SK-N-SH (cell line): ENCODE measurements at regions of chr18 and their contacts with region 1.

Region 1: DNA sequence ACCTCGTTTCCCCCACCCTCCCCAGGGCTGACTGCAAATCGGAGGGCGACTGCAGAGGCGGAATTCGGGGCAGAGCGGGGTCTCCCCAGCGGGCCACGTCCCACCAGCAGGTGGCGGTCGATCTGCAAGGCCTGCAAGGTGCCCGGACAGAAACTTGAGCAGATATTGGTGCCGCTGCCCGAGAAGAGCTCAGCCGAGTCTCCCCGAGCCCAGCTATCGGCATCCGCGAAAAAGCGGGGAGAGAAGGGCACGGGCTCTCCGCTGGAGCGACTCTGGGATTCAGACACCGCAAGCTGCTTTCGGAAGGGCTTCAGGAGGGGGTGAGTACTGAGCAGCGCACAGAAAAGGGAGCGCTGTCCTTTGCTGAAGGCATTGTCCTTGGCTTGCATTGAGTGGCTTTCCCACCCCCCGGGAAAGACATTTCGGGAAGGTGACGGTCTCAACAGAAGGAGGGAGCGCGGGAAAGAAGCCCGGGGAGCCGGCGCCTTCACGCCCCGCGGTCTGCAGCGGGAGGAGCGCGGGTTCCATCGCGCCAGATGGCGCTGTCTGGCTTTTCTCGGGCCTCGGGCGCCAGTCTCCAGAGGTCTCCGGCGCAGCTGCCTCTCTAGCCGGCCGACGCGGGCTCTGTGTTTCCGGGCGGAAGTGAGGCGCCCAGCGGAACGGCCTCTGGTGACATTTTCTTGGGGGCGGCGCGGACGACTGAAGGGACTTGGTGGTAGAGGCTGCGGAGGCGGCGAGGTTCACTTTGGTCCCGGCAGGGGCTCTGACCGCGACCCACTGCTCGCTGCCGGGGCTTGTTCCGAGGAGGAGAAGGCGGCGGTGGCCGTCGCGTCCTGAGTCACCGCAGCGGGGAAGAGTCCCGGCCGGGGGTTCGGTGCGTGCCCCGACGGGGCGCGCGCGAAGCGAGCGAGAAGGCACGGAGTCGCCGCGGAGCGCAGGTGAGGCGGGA is 69.5 kb downstream of the HAUS1 start:
- DNase-seq: peak; percentile 95
- H3K4me3 ChIP-seq: peak overlapping the region; percentile 77 to 98
- H3K27ac ChIP-seq: peak overlapping the region; percentile 85 to 92
- H3K4me1 ChIP-seq: peaks cover 7 to 14% of the 10 kb centered on the region in 2 experiments; a peak in 2 of 4 replicates
- H3K27me3 ChIP-seq: no peaks in the 10 kb centered on the region
- CTCF ChIP-seq: peak; percentile 91
- EP300 ChIP-seq: peak; percentile 22 to 43; a peak in 2 of 4 replicates
- RAD21 ChIP-seq: peak; percentile 77

Region 2: GRCh38 chr18:46148810-46149209 is 24.9 kb before region 1 on chr18:
- CTCF ChIA-PET with region 1: interaction called, 42 read pairs
- POLR2A ChIA-PET with region 1: interaction called, 3 read pairs
- DNase-seq: peak; percentile 70
- H3K4me3 ChIP-seq: no peak overlapping the region; a peak in 1 of 4 replicates
- H3K27ac ChIP-seq: no peak overlapping the region
- H3K4me1 ChIP-seq: peaks cover 12 to 13% of the 10 kb centered on the region in 2 experiments; a peak in 1 of 4 replicates
- H3K27me3 ChIP-seq: no peaks in the 10 kb centered on the region
- CTCF ChIP-seq: peak; percentile 84
- EP300 ChIP-seq: no peak
- RAD21 ChIP-seq: peak; percentile 81

Region 3: DNA sequence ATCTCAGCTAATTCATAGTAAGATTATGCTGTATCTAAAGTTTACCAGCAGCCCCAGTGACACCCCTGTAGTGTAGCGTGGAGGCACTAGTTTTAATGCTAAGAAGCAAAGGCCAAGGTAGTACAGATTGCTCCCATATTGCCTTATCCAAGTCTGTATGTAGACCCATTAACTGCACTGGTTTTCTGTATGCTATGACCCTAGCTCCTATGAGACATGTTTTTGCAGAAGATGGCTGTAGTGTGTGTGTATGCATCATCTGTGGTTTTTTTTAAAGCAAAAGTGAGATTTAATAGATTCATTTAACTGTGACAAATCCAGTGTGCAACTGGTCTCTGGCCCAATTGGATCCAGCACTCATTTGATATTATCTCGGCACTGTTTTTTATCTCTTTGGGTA is 17.0 kb after region 1 on chr18:
- CTCF ChIA-PET with region 1: interaction called, 14 read pairs
- POLR2A ChIA-PET with region 1: no interaction called
- DNase-seq: no peak
- H3K4me3 ChIP-seq: no peak overlapping the region
- H3K27ac ChIP-seq: no peak overlapping the region
- H3K4me1 ChIP-seq: no peaks in the 10 kb centered on the region
- H3K27me3 ChIP-seq: no peaks in the 10 kb centered on the region
- CTCF ChIP-seq: no peak
- EP300 ChIP-seq: no peak
- RAD21 ChIP-seq: no peak

Region 4: GRCh38 chr18:46213295-46213694 is 39.6 kb after region 1 on chr18:
- CTCF ChIA-PET with region 1: interaction called, 13 read pairs
- POLR2A ChIA-PET with region 1: no interaction called
- DNase-seq: peak; percentile 17
- H3K4me3 ChIP-seq: no peak overlapping the region
- H3K27ac ChIP-seq: no peak overlapping the region
- H3K4me1 ChIP-seq: peaks cover 0 to 11% of the 10 kb centered on the region in 2 experiments; a peak in 2 of 4 replicates
- H3K27me3 ChIP-seq: no peaks in the 10 kb centered on the region
- CTCF ChIP-seq: peak; percentile 42
- EP300 ChIP-seq: no peak
- RAD21 ChIP-seq: peak; percentile 33; the same call in 1 of the 2 replicates

Region 5: GRCh38 chr18:46264235-46264893 is 90.7 kb after region 1 on chr18:
- CTCF ChIA-PET with region 1: interaction called, 12 read pairs
- POLR2A ChIA-PET with region 1: no interaction called
- DNase-seq: no peak
- H3K4me3 ChIP-seq: no peak overlapping the region
- H3K27ac ChIP-seq: peak overlapping the region in 1 of 2 experiments; percentile 23; a peak in 2 of 4 replicates
- H3K4me1 ChIP-seq: peaks cover 0 to 31% of the 10 kb centered on the region in 2 experiments; a peak in 2 of 4 replicates
- H3K27me3 ChIP-seq: no peaks in the 10 kb centered on the region
- CTCF ChIP-seq: no peak
- EP300 ChIP-seq: no peak
- RAD21 ChIP-seq: no peak

Region 6: DNA sequence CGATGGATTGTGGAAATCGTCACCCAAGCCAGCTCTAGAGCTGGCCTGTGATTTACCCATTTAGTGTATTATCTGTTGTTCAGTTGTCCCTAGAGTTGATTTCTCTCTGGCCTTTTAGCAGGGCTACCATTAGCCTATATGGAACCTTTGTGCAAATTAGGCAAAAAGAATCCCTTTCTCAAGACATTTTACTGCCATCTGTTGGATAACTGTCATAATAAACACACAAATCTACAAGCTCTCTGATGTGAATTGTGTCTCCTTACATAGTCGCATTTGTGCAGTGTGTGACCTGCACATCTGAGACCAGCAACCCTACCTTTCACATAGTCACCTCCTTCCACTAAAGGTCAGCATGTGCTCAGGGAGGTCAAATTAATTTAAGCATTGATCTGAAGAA is 449.3 kb after region 1 on chr18:
- CTCF ChIA-PET with region 1: interaction called, 42 read pairs
- POLR2A ChIA-PET with region 1: interaction called, 4 read pairs
- DNase-seq: peak; percentile 27
- H3K4me3 ChIP-seq: no peak overlapping the region
- H3K27ac ChIP-seq: peak overlapping the region in 1 of 2 experiments; percentile 86; a peak in 2 of 4 replicates
- H3K4me1 ChIP-seq: peaks cover 0 to 26% of the 10 kb centered on the region in 2 experiments; a peak in 2 of 4 replicates
- H3K27me3 ChIP-seq: no peaks in the 10 kb centered on the region
- CTCF ChIP-seq: peak; percentile 37
- EP300 ChIP-seq: no peak
- RAD21 ChIP-seq: peak; percentile 63

Region 7: GRCh38 chr18:46660955-46661749 is 487.5 kb after region 1 on chr18:
- CTCF ChIA-PET with region 1: interaction called, 155 read pairs
- POLR2A ChIA-PET with region 1: interaction called, 7 read pairs
- DNase-seq: peak; percentile 48
- H3K4me3 ChIP-seq: no peak overlapping the region
- H3K27ac ChIP-seq: no peak overlapping the region
- H3K4me1 ChIP-seq: no peaks in the 10 kb centered on the region
- H3K27me3 ChIP-seq: no peaks in the 10 kb centered on the region; the same call in 1 of the 2 replicates
- CTCF ChIP-seq: no peak
- EP300 ChIP-seq: no peak
- RAD21 ChIP-seq: no peak